Right ventricle myocardium inferior (tissue), 1 donor: ENCODE measurements at regions of chr15 and their contacts with region 1.

Region 1: DNA sequence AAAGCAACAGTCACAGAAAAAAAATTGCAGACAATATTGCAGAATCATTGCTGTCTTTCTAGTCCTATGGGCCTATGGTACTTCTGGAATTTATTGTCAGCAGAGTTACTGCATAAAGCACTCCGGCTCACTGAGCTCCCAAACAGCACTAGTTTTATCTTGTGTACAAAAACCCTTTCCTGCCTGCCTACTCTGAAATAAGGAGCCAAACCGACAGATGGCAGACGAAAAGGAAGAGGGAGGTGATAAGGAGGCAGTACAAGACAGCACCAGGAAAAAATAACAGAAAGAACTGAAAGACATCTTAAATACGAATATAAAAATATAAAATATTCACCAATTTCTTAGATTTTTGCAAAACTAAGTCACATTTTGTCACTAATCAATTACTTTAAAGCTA is 15.6 kb downstream of the HERC1 start:
- DNase-seq: no peak
- ATAC-seq: peak; percentile 58

Region 2: DNA sequence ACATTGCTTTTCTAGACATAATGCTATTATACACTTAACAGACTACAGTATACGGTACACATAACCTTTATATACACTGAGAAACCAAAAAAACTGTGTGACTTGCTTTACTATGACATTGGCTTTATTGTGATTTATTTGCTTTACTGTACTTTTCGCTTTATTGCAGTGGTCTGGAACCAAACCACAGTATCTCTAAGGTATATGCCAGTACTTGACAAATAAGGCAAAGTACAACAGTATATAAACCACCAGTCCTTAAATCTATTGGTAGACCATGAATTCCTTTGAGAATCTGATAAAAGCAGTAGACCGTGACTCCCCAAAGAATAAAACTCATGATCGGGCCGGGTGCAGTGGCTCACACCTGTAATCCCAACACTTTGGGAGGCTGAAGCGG is 34.8 kb before region 1 on chr15:
- intact Hi-C with region 1: loop called (anchors 5 kb)
- DNase-seq: no peak
- ATAC-seq: no peak

Region 3: DNA sequence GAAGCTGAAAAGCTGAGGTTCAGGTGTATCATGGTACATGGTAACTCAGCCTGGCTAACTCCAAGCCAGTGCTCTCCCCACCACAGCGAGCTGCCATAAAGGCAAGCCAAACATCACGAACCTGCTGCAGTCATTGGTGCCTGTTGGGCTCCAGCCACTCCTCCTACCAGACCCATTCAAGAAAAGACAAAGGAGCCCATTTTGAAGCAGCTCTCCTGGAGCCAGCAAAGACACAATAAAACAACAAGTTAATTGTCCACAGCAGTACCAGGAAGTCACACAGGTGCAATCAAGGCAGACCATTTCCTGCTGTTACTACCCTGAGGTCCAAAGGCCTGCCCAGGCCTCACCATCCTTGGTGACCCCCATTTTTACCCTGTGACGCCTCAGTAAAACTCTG is 150.5 kb after region 1 on chr15:
- intact Hi-C with region 1: no loop called
- DNase-seq: no peak
- ATAC-seq: no peak